Calu3 (cell line): ENCODE measurements at regions of chr1 and their contacts with region 1.

Region 1: GRCh38 chr1:84143796-84144565 is at the start of gene PRKACB:
- DNase-seq: no peak
- H3K4me3 Mint-ChIP-seq: peak within 1 kb of the TSS; percentile 48
- H3K27ac Mint-ChIP-seq: peak within 1 kb of the TSS; percentile 83
- H3K4me1 Mint-ChIP-seq: peaks cover 27% of the 10 kb centered on the region
- H3K27me3 Mint-ChIP-seq: no peaks in the 10 kb centered on the region
- CTCF ChIP-seq: no peak
- total RNA-seq, gene PRKACB: 28.5 and 30.3 TPM in 2 replicates

Region 2: DNA sequence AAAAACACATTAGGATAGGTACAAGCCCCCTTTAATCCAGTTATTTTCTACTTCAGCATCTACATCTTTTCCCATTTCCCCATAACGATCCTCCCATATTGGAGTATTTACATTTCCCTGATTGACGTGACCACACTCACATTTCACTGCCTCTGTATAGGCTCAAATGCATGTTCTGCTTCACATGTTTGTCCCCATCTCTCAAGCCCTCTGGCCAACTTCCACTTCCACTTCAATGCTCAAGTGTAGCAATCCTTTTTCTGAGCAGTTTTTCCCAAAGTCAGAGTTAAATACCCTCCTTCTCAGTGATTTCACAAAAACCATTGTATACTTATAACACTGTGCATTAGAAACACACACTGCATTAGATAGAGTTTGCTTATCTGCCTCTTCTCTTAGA is 83.2 kb before region 1 on chr1:
- CTCF ChIA-PET with region 1: no interaction called
- intact Hi-C with region 1: no loop called
- DNase-seq: no peak
- H3K4me3 Mint-ChIP-seq: no peak overlapping the region
- H3K27ac Mint-ChIP-seq: no peak overlapping the region
- H3K4me1 Mint-ChIP-seq: no peaks in the 10 kb centered on the region
- H3K27me3 Mint-ChIP-seq: no peaks in the 10 kb centered on the region
- CTCF ChIP-seq: no peak

Region 3: DNA sequence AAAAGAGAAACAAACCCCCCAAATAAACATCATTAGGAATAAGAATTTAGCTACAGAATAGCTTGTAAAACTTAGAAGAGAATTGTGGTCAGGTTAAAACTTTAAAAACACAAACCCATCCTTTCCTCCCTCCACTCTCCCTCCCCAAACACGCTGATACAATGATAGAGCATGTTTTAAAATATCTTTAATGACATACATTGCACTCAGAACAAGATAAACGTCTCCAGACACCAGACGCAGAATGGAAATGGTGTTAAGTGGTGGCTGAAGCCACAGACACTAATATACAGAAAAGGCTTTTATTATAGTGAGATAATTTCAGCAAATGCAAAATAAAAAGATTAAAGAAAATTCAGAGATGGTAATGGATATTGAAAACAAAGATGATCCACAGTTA is 98.7 kb after region 1 on chr1:
- CTCF ChIA-PET with region 1: no interaction called
- intact Hi-C with region 1: no loop called
- DNase-seq: no peak
- H3K4me3 Mint-ChIP-seq: no peak overlapping the region
- H3K27ac Mint-ChIP-seq: no peak overlapping the region
- H3K4me1 Mint-ChIP-seq: no peaks in the 10 kb centered on the region
- H3K27me3 Mint-ChIP-seq: no peaks in the 10 kb centered on the region
- CTCF ChIP-seq: no peak

Region 4: DNA sequence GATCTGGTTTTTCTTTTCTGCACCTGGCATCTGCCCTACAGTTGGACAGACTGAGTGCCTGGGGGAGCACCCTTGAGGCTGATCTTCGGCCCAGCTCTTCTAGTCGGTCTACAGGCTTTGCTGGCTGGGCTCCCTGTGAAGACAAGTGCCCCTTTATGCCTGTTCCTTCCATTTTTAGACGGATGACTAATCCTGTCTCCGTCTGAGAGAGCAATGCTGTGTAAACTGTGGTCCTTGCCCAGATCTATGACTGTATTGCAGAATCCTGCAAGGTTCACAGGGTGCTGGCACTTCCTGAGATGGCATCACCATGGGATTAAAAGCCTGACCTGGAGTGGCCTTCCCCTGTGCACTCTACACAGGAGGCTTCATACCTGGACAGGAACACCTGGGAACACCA is 109.9 kb after region 1 on chr1:
- CTCF ChIA-PET with region 1: interaction called, 3 read pairs
- intact Hi-C with region 1: loop called (anchors 5 kb)
- DNase-seq: peak; percentile 84
- H3K4me3 Mint-ChIP-seq: no peak overlapping the region
- H3K27ac Mint-ChIP-seq: peak overlapping the region; percentile 70
- H3K4me1 Mint-ChIP-seq: peaks cover 60% of the 10 kb centered on the region
- H3K27me3 Mint-ChIP-seq: no peaks in the 10 kb centered on the region
- CTCF ChIP-seq: no peak

Region 5: DNA sequence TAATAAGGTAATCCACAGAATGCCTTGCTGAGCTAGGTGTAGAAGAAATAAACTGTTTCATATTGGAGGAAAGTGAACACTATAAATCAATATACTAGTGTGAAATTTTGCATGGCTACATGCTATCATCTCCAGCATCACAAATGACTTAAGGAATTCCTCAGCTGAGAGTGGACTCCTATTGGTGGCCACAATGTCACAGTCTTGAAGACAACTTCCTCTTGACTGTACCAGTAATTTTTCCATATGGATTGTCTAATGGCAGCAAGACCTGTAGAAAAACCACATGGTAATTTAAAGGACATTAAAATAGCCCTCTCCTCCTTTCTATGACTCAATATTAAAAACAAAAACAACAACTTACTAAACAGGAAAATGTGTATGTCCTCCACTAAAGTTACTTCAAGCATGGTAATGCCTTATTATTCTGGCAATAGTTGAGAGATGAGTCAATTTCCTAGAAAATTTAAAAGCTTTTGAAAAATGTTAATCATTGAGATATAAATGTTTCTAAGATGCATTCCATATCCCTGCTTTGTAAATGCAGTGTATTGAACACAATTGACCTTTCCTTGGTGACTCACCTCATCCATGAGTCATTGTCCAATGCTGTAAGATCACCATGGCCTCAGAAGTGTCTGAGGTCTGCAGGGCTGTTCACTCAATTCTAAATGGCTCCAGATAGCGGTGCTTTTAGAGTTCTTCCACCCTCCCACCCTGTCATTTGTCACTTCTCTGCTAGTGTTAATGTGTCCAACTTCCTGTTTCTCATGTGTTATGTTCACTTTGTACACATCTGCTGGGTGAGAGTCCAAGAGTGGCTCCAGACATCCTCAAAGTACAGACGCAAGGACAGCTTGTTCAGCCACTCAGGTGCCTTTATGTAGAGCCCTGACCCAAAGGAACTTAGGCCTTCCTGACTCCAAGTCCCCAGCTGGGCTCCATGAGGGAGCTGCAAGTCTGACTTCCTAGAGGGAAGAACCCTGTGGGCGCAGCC is 221.5 kb after region 1 on chr1:
- CTCF ChIA-PET with region 1: no interaction called
- intact Hi-C with region 1: loop called (anchors 5 kb)
- DNase-seq: peak; percentile 76
- H3K4me3 Mint-ChIP-seq: no peak overlapping the region
- H3K27ac Mint-ChIP-seq: peak overlapping the region; percentile 89
- H3K4me1 Mint-ChIP-seq: peaks cover 31% of the 10 kb centered on the region
- H3K27me3 Mint-ChIP-seq: no peaks in the 10 kb centered on the region
- CTCF ChIP-seq: no peak

Region 6: DNA sequence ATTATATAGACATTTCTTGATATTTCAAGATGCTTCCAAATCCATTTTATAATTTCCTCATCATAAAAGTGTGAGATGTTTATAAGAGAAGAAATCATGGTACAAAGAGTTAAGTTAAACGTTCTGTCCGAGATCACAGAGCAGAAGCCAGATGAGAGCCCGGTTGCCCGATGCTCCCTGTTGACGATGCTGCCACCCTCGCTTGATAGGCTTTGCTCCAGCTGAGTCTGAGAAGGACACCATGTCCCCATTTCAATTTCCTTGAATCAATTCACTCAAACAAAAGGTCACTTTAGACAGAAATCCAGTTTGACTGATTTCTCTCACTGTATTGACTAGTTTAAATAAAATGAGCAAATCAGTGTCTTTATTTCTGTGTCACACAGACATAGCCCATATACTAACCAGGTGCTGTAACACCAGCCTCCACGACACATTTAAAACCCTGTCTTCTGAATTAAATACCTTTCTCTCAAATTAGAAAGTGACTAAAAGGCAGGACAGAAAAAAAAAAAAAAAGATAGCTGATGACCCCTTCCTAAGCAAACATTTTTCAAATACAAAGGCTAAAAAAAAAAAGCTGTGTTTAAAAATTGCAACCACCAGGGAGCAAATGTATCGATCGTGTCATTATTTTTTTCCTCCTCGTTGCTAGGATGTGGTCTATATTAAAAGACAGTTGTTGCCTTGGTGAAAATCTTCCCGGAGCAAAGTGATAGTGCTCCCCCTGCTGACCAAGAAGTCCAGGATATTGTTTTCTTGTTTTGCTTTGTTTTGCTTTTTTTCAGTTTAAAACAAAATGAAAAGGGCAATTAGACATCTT is 289.5 kb after region 1 on chr1:
- CTCF ChIA-PET with region 1: interaction called, 57 read pairs
- intact Hi-C with region 1: loop called (anchors 1 kb)
- DNase-seq: peak; percentile 69
- H3K4me3 Mint-ChIP-seq: no peak overlapping the region
- H3K27ac Mint-ChIP-seq: peak overlapping the region; percentile 48
- H3K4me1 Mint-ChIP-seq: peaks cover 16% of the 10 kb centered on the region
- H3K27me3 Mint-ChIP-seq: no peaks in the 10 kb centered on the region
- CTCF ChIP-seq: peak; percentile 75

Region 7: DNA sequence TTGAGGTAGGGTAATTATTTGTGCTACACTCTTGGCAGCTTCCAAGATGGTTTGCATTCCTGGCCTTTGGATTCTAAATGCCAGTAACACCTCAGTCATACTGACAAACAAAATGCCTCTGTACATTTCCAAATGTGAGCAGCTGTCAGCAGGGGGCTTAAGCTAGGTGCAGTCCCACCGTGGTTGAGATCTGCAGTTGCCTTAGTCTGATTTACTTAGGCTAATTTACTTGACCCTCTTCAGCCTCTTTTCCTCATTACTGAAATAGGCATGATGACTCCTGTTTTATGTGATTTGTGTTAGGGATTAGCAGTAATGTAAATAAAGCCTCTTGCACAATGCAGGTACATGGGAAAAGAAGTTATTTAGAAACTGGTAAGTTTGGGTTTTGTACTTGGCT is 348.7 kb after region 1 on chr1:
- CTCF ChIA-PET with region 1: no interaction called
- intact Hi-C with region 1: no loop called
- DNase-seq: no peak
- H3K4me3 Mint-ChIP-seq: no peak overlapping the region
- H3K27ac Mint-ChIP-seq: no peak overlapping the region
- H3K4me1 Mint-ChIP-seq: no peaks in the 10 kb centered on the region
- H3K27me3 Mint-ChIP-seq: no peaks in the 10 kb centered on the region
- CTCF ChIP-seq: no peak

Region 8: GRCh38 chr1:84603941-84604830 is 460.2 kb after region 1 on chr1:
- CTCF ChIA-PET with region 1: interaction called, 3 read pairs
- intact Hi-C with region 1: loop called (anchors 5 kb)
- DNase-seq: peak; percentile 38
- H3K4me3 Mint-ChIP-seq: peak overlapping the region; percentile 60
- H3K27ac Mint-ChIP-seq: peak overlapping the region; percentile 30
- H3K4me1 Mint-ChIP-seq: peaks cover 26% of the 10 kb centered on the region
- H3K27me3 Mint-ChIP-seq: no peaks in the 10 kb centered on the region
- CTCF ChIP-seq: no peak

Region 9: DNA sequence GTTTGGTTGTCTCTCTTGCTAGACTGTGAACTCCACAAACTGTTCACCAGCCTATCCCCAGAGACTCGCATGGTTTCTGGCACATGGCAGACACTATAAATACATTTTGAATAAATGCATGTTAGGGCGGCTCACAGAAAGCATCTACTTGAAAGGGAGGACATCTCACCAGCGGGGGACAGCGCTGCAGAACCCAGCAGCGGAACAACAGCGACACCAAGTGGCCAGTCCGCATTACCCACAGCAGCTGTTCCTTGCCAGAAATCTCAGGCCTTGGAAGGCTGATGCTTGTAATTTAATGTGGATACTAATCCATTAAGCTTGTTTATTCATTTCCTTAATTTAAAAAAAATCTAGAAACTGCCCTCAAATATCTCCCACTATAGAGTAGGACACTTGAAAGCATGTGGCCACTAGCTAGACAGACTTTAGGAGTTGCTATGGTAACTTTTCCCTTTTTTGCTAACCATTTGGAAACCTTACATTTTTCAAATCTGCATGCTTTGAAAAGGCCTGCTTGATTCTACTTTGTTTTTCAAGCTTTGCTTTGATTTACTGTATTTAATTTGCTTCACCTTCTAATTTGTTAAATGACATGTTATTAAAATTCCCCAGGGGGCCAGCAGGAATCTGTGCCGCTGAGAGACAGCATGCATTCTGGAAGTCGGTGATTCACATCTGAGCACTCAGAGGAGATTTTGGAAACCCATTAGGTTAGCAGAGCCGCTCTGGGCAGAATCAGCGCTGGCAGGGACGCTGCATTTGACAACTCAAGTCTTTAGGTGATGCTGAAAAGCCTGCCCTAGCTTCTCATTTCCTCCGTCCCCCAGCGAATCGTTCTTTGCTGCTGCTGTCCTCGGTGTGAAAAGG is 609.8 kb after region 1 on chr1:
- CTCF ChIA-PET with region 1: interaction called, 3 read pairs
- intact Hi-C with region 1: loop called (anchors 1 kb)
- DNase-seq: peak; percentile 76
- H3K4me3 Mint-ChIP-seq: no peak overlapping the region
- H3K27ac Mint-ChIP-seq: peak overlapping the region; percentile 47
- H3K4me1 Mint-ChIP-seq: peaks cover 29% of the 10 kb centered on the region
- H3K27me3 Mint-ChIP-seq: no peaks in the 10 kb centered on the region
- CTCF ChIP-seq: peak; percentile 95

Region 10: GRCh38 chr1:84936116-84936810 is 792.3 kb after region 1 on chr1:
- CTCF ChIA-PET with region 1: no interaction called
- intact Hi-C with region 1: loop called (anchors 5 kb)
- DNase-seq: peak; percentile 25
- H3K4me3 Mint-ChIP-seq: no peak overlapping the region
- H3K27ac Mint-ChIP-seq: no peak overlapping the region
- H3K4me1 Mint-ChIP-seq: no peaks in the 10 kb centered on the region
- H3K27me3 Mint-ChIP-seq: no peaks in the 10 kb centered on the region
- CTCF ChIP-seq: peak; percentile 85